A673 (cell line): ENCODE measurements at regions of chr1 and their contacts with region 1.

Region 1: DNA sequence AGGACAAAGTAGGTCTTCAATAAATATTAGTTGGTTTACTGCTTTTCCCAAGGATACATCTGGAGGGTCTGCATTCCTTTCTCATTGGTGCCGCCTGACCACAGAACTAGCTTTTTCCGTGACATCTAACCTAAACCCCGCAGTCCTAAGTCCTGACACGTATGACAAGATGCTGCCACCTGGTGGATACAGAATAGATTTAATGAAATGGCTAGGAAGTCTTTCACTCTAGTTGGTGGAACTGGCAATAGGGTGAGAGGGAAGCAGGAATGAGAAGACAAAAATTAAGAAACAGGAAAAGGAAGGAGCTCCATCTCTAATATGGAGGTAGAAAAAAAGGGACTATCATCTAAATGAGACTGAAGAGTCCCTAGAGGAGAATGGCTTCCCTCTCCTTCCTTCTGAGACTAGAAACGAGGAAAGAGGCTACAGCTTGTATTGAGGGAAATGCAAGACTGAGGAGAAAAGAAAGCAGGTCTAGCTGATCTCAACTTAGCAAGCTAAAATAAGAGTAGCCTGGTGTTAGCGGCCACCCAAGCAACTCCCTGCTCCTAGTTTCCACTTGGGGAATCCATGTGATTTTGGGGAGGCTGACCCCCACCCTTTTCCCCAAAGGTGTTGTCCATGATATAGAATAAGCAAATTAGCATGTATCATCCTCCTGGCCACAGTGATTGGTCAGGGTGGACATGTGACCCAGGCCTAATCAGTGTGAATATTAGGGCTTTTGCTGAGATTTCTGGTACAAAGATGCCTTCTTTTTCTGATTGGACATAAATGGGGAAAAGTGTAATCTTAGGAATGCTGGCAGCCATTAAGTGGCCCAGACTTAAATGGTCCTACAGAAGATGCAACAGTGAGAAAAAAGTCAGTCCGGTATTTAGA is 5.9 kb downstream of the RFX5 start:
- DNase-seq: peak; percentile 88
- H3K4me3 ChIP-seq: no peak overlapping the region
- H3K27ac ChIP-seq: no peak overlapping the region
- H3K4me1 ChIP-seq: peaks cover 10% of the 10 kb centered on the region
- H3K27me3 ChIP-seq: no peaks in the 10 kb centered on the region
- CTCF ChIP-seq: peak; percentile 81

Region 2: GRCh38 chr1:151146412-151147140 is 194.5 kb before region 1 on chr1 and contains the start of gene SEMA6C:
- CTCF ChIA-PET with region 1: no interaction called
- POLR2A ChIA-PET with region 1: no interaction called
- intact Hi-C with region 1: no loop called
- DNase-seq: peak; percentile 88
- H3K4me3 ChIP-seq: peak within 1 kb of the TSS; percentile 86
- H3K27ac ChIP-seq: peak within 1 kb of the TSS; percentile 66
- H3K4me1 ChIP-seq: peaks cover 9% of the 10 kb centered on the region
- H3K27me3 ChIP-seq: no peaks in the 10 kb centered on the region
- CTCF ChIP-seq: no peak
- total RNA-seq, gene SEMA6C: 4.7 and 8.9 TPM in 2 replicates

Region 3: DNA sequence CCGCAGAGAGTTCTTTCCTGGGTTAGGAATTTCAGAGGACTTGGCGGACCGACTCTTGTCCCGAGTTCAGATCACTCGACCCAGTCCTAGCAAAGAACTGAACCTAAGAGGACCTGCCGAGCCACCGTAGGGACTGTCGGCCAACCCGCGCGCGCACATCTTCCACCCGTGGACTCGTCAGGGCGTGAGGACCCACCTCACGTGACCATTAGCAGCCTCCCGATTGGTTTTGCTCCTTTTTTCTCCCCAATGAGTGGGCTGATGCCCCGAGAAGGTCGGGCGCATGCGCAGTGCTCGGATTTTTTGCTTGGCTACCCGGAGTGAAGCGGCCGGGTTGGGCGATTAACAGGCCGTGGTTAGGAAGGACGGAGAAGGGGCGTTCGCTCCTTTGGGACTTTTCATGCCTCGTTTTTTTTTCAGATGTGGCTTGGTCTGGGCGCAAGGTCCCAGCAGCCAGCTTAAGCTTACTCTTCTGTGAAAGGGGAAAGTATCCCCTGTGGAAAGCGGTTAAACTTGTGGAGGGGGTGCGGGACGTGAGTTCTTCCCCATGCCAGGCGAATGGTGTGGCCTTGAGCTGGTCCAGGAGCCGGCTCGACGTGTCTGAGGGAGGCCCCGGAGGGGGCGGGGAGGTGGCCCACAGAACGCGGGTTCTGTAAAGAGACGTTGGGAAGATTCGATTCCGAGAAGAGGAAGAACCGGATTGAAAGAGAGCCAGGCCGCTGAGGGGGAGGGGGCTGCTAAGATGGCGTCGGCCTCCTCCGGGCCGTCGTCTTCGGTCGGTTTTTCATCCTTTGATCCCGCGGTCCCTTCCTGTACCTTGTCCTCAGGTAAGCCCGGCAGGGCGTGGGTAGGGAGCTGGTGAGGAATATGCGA is 142.6 kb before region 1 on chr1 and contains the start of gene PIP5K1A:
- CTCF ChIA-PET with region 1: no interaction called
- POLR2A ChIA-PET with region 1: no interaction called
- intact Hi-C with region 1: loop called (anchors 1 kb)
- DNase-seq: peak; percentile 99
- H3K4me3 ChIP-seq: peak within 1 kb of the TSS; percentile 68
- H3K27ac ChIP-seq: peak within 1 kb of the TSS; percentile 90
- H3K4me1 ChIP-seq: peaks cover 6% of the 10 kb centered on the region
- H3K27me3 ChIP-seq: no peaks in the 10 kb centered on the region
- CTCF ChIP-seq: no peak
- total RNA-seq, gene PIP5K1A: 109 and 115 TPM in 2 replicates

Region 4: GRCh38 chr1:151292207-151293030 is 48.7 kb before region 1 on chr1:
- CTCF ChIA-PET with region 1: no interaction called
- POLR2A ChIA-PET with region 1: interaction called, 11 read pairs
- intact Hi-C with region 1: no loop called
- DNase-seq: no peak
- H3K4me3 ChIP-seq: no peak overlapping the region
- H3K27ac ChIP-seq: no peak overlapping the region
- H3K4me1 ChIP-seq: no peaks in the 10 kb centered on the region
- H3K27me3 ChIP-seq: no peaks in the 10 kb centered on the region
- CTCF ChIP-seq: no peak

Region 5: DNA sequence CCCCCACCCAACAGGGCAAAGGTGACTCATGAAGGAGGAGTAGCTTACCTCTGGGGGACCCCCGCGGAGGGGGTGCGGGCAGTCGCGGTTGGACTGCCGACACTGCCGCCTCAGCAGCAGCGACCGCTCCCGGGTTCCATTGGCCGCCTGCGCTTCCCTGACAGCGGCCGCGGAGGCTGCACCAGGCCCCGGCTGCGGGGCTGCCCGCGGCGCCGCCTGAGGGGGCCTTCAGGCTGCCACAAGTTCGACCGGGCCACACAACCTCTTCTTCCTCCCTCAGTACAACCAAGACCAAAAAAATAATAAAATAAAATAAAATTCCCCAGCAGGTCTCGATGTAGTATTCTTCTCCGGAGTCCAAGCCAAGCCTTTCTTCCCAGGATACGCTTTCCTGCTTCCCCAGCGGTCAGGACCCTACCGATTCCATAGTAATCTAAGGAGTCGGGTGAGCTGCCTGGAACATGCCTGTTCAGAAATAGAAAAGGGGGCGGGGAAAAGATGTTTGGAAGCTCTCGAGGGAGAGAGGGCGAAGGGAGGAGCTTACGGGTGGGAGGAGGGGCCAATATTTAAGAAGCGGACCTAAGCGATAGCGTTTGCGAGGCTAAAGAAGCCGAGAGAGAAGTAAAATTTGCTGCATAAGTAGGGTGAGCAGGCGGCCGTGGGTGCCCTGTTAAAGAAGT is 13.7 kb before region 1 on chr1 and contains the start of gene PI4KB:
- CTCF ChIA-PET with region 1: interaction called, 12 read pairs
- POLR2A ChIA-PET with region 1: no interaction called
- intact Hi-C with region 1: no loop called
- DNase-seq: peak; percentile 99
- H3K4me3 ChIP-seq: peak within 1 kb of the TSS; percentile 66
- H3K27ac ChIP-seq: peak within 1 kb of the TSS; percentile 97
- H3K4me1 ChIP-seq: peaks cover 8% of the 10 kb centered on the region
- H3K27me3 ChIP-seq: no peaks in the 10 kb centered on the region
- CTCF ChIP-seq: no peak
- total RNA-seq, gene PI4KB: 62.1 and 62.8 TPM in 2 replicates

Region 6: DNA sequence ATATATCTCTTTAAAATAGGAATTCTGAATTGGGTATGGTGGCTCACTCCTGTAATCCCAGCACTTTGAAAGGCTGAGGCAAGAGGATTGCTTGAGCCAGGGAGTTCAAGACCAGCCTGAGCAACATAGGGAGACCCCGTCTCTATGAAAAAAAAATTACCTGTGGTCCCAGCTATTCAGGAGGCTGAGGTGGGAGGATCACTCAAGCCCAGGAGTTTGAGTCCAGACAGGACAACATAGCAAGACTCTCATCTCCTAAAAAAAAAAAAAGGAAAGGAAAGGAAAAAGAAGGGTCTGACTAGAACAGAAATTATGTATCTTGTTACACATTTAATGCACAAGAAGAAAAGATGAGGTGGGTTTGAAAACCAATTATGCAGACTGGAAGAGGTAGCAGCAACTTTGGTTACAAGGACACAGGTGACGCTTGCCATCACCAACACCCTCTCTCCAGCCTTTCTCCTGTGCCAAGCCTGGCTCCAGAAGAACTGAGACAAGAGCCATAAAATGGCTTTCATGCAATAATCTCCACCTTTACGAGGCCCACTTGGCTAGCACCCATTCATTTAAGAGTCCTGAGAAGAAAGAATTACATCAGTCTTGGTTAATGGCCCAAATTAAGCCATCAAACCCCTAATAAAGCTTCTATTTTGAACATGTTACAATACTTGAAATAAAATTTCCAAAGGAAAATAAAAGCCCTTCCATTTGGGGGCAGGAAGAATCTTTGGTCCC is 36.2 kb after region 1 on chr1:
- CTCF ChIA-PET with region 1: no interaction called
- POLR2A ChIA-PET with region 1: no interaction called
- intact Hi-C with region 1: no loop called
- DNase-seq: no peak
- H3K4me3 ChIP-seq: no peak overlapping the region
- H3K27ac ChIP-seq: no peak overlapping the region
- H3K4me1 ChIP-seq: peaks cover 4% of the 10 kb centered on the region
- H3K27me3 ChIP-seq: no peaks in the 10 kb centered on the region
- CTCF ChIP-seq: no peak